ENCODE measurements at regions of chr6 and their contacts with region 1.

Region 1: DNA sequence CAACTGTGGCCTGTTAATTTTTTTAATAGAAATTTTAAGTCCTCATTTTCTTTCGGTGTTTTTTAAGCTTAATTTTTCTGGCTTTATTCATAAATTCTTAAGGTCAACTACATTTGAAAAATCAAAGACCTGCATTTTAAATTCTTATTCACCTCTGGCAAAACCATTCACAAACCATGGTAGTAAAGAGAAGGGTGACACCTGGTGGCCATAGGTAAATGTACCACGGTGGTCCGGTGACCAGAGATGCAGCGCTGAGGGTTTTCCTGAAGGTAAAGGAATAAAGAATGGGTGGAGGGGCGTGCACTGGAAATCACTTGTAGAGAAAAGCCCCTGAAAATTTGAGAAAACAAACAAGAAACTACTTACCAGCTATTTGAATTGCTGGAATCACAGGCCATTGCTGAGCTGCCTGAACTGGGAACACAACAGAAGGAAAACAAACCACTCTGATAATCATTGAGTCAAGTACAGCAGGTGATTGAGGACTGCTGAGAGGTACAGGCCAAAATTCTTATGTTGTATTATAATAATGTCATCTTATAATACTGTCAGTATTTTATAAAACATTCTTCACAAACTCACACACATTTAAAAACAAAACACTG is 10.1 kb downstream of the HFE start:
- DNase-seq: peak; percentile 55 to 87 (median 67)
- H3K4me3 ChIP-seq: no peak overlapping the region
- H3K27ac ChIP-seq: no peak overlapping the region
- H3K4me1 ChIP-seq: no peaks in the 10 kb centered on the region
- H3K27me3 ChIP-seq: no peaks in the 10 kb centered on the region
- CTCF ChIP-seq: peak; percentile 80 to 89 (median 82)
- POLR2A ChIP-seq: no peak

Region 2: DNA sequence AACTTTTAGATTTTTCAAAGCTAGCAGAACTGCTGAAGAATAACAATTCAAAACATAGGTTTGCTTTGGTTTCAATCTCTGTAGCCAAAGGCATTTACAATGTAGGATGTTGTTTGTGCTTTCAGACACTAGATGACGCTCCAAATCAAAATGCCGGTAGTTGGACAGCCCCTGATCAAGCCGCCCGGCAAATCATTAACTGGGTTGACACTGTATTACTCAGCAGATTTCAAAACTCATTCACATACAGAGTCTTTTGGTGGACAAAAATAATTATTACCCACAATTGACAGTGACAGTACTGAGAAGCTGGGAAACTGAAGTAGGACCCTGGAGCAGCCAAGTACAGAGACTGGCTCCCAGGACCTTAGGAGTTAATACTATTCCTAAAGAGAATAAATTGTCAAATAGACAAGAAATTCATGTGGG is 31.4 kb before region 1 on chr6:
- intact Hi-C with region 1: loop called (anchors 2 to 5 kb)
- DNase-seq: peak; percentile 56 to 84 (median 77)
- H3K4me3 ChIP-seq: no peak overlapping the region
- H3K27ac ChIP-seq: peak overlapping the region in 1 of 5 donors; percentile 7
- H3K4me1 ChIP-seq: peaks cover 0 to 6% of the 10 kb centered on the region in 2 donors
- H3K27me3 ChIP-seq: no peaks in the 10 kb centered on the region
- CTCF ChIP-seq: peak; percentile 77 to 92 (median 90)
- POLR2A ChIP-seq: no peak

Region 3: GRCh38 chr6:26156076-26156849 is 58.9 kb after region 1 on chr6:
- intact Hi-C with region 1: no loop called
- DNase-seq: peak; percentile 88 to 97 (median 92)
- H3K4me3 ChIP-seq: peak overlapping the region; percentile 48 to 79 (median 72)
- H3K27ac ChIP-seq: peak overlapping the region; percentile 88 to 97 (median 95)
- H3K4me1 ChIP-seq: peaks cover 6 to 13% of the 10 kb centered on the region in 2 donors
- H3K27me3 ChIP-seq: no peaks in the 10 kb centered on the region
- CTCF ChIP-seq: peak in 1 of 6 experiments; percentile 5
- POLR2A ChIP-seq: peak; percentile 100